Activated T-helper 1 cell treated with anti-CD3 and anti-CD28 coated beads, Interleukin-12 subunit alpha, Interleukin-12 subunit beta, Interleukin-2, Interleukin-4 antibody, amounts not matched to agents 30 ng/mL and 10 ng/mL and 1 ng/mL, durations not matched to agents 14 hours and 24 hours and 36 hours (primary cell): ENCODE measurements at regions of chr1 and their contacts with region 1.

Region 1: DNA sequence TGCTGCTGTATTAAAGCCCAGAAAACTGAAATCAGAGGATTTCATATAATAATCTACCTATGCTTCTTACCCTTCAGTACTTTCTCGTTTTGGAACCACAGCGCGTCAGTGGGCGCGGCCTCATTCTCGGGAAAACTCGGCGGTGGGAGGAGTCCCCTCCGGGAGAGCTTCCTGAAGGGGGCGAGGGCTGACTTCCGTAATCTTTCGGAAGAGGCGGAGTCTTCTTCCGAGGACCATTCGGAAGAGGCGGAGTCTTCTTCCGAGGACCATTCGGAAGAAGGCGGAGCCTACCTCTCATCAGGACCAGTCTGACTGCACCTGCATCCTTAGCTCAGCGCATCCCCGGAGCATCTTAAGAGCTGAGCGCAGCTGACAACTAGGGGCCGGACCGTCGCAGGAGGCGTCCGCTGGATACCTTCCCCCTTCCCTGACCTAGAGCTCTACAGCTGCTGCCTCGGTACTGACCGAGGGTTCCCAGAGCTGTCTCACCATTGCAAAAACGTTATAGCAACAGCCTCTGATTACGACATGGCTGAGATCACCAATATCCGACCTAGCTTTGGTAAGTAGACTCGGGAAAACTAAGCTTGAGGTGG is at the start of gene SYT11:
- DNase-seq: peak; percentile 90
- H3K4me3 Mint-ChIP-seq: peak within 1 kb of the TSS; percentile 89
- H3K27ac Mint-ChIP-seq: peak within 1 kb of the TSS; percentile 98
- H3K4me1 Mint-ChIP-seq: peaks cover 47% of the 10 kb centered on the region
- H3K27me3 Mint-ChIP-seq: no peaks in the 10 kb centered on the region
- total RNA-seq, gene SYT11: 25.7 and 26.8 TPM in 2 replicates

Region 2: GRCh38 chr1:155277070-155277895 is 582.0 kb before region 1 on chr1 and contains the start of gene HCN3:
- intact Hi-C with region 1: loop called (anchors 2 kb)
- DNase-seq: peak; percentile 91
- H3K4me3 Mint-ChIP-seq: peak within 1 kb of the TSS; percentile 83
- H3K27ac Mint-ChIP-seq: peak within 1 kb of the TSS; percentile 62
- H3K4me1 Mint-ChIP-seq: peaks cover 38% of the 10 kb centered on the region
- H3K27me3 Mint-ChIP-seq: peaks cover 7% of the 10 kb centered on the region
- total RNA-seq, gene HCN3: 2.5 and 3.3 TPM in 2 replicates

Region 3: GRCh38 chr1:155688324-155689080 is 170.8 kb before region 1 on chr1 and contains the start of gene YY1AP1:
- intact Hi-C with region 1: loop called (anchors 2 kb)
- DNase-seq: peak; percentile 88
- H3K4me3 Mint-ChIP-seq: peak within 1 kb of the TSS; percentile 95
- H3K27ac Mint-ChIP-seq: peak within 1 kb of the TSS; percentile 96
- H3K4me1 Mint-ChIP-seq: peaks cover 62% of the 10 kb centered on the region
- H3K27me3 Mint-ChIP-seq: peaks cover 3% of the 10 kb centered on the region
- total RNA-seq, gene YY1AP1: 62.2 and 64.4 TPM in 2 replicates

Region 4: GRCh38 chr1:155911156-155912055 is 52.1 kb after region 1 on chr1 and contains the start of gene RIT1:
- intact Hi-C with region 1: loop called (anchors 1 kb)
- DNase-seq: peak; percentile 81
- H3K4me3 Mint-ChIP-seq: peak within 1 kb of the TSS; percentile 98
- H3K27ac Mint-ChIP-seq: peak within 1 kb of the TSS; percentile 97
- H3K4me1 Mint-ChIP-seq: peaks cover 23% of the 10 kb centered on the region
- H3K27me3 Mint-ChIP-seq: peaks cover 2% of the 10 kb centered on the region
- total RNA-seq, gene RIT1: 20.2 and 22.3 TPM in 2 replicates

Region 5: GRCh38 chr1:156020292-156021089 is 161.2 kb after region 1 on chr1 and contains the start of gene SSR2:
- intact Hi-C with region 1: loop called (anchors 1 kb)
- DNase-seq: peak; percentile 85
- H3K4me3 Mint-ChIP-seq: peak within 1 kb of the TSS; percentile 98
- H3K27ac Mint-ChIP-seq: peak within 1 kb of the TSS; percentile 94
- H3K4me1 Mint-ChIP-seq: peaks cover 29% of the 10 kb centered on the region
- H3K27me3 Mint-ChIP-seq: peaks cover 4% of the 10 kb centered on the region
- total RNA-seq, gene SSR2: 195 TPM in 2 replicates

Region 6: DNA sequence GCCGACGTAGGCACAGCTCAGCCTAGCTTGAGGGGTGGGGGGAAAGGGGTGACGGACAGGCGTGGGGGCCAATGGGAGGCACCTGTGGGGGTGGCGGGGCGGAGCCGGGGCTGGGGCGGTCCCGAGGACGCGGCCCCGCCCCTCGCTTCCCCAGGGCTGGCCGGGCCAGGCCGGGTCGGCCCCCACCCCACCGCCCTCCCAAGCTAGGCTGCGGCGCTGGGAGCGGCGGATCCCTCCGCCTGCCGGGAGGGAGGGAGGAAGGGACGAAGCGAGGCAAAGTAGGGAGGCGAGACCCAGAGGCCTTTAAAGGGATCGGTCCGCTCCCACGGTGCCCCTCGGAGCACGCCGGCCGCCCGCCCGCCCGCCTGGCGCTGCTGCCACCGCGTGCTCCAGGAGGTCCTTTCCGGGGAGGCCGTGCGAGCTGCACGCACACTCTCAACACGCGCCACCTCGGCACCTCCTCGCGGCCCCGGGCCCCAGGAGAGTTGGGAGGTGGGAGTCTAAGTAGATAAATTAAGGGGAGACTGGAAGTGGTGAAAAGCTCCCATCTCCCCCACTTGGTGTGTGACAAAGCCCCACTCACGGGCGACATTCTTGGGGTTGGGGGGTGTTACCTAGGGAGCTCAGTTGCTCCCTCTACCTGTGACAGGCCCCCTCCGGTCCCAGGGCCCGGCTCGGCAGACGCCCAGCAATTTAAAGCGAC is 641.6 kb after region 1 on chr1:
- intact Hi-C with region 1: loop called (anchors 10 kb)
- DNase-seq: peak; percentile 87
- H3K4me3 Mint-ChIP-seq: peak overlapping the region; percentile 90
- H3K27ac Mint-ChIP-seq: peak overlapping the region; percentile 91
- H3K4me1 Mint-ChIP-seq: peaks cover 78% of the 10 kb centered on the region
- H3K27me3 Mint-ChIP-seq: no peaks in the 10 kb centered on the region